Tibial artery (tissue), 4 donors: ENCODE measurements at regions of chr4 and their contacts with region 1.

Region 1: GRCh38 chr4:3322059-3322550 is 29.3 kb downstream of the RGS12 start:
- DNase-seq: peak in 1 of 2 donors; percentile 48
- H3K4me3 ChIP-seq: no peak overlapping the region
- H3K27ac ChIP-seq: no peak overlapping the region
- H3K4me1 ChIP-seq: no peaks in the 10 kb centered on the region
- H3K27me3 ChIP-seq: no peaks in the 10 kb centered on the region
- CTCF ChIP-seq: no peak

Region 2: DNA sequence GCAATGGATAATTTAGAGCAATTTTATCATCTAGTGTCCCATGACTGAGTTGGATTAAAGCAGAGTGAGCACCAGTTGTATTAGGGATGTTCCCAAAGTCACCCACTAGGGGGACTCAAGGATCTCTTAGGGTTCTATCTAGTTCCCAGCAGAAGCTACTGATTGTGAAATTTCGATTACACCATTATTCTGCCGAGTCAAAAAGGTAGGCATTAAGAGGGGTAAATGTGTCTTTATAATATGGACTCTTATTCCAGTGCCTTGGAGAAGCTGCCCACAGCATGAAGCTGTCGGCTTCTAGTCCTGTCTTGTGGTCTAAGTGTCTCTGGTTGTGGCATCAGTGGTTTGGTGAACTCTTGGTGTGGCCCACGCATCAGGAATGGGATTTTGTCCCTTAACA is 24.0 kb after region 1 on chr4:
- intact Hi-C with region 1: no loop called
- DNase-seq: peak in 1 of 2 donors; percentile 58
- H3K4me3 ChIP-seq: no peak overlapping the region
- H3K27ac ChIP-seq: no peak overlapping the region
- H3K4me1 ChIP-seq: peaks cover 0 to 3% (median 0%) of the 10 kb centered on the region in 4 donors
- H3K27me3 ChIP-seq: no peaks in the 10 kb centered on the region
- CTCF ChIP-seq: peak; percentile 89 to 94

Region 3: DNA sequence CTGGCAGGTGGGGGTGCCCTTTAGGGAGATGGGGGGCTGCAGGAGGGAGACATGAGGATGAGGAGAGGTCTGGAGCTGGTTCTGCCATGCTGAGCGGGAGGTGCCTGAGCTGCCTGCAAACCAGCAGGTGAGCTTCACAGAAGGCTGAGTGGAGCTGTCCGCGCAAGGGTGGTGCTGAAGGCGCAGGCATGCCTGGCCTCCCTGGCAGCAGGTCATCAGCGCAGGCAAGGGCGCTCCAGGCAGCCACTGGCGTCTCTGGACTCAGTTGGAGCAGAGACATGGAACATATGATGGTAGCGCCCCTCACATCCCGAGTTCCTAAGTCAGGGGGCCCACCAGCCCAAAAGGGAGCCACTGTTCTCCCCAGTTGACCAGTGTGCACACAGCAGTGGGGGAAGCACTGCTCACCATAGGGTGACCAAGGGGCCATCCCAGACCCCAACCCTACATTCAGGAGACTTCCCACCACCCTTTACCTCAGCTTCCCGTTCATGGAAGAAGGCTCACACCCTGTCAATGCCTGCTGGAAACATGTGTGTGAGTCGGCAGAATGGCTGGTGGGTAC is 470.0 kb after region 1 on chr4:
- intact Hi-C with region 1: loop called (anchors 10 kb)
- DNase-seq: no peak
- H3K4me3 ChIP-seq: no peak overlapping the region
- H3K27ac ChIP-seq: no peak overlapping the region
- H3K4me1 ChIP-seq: no peaks in the 10 kb centered on the region
- H3K27me3 ChIP-seq: peaks cover 0 to 41% of the 10 kb centered on the region in 2 donors
- CTCF ChIP-seq: no peak